IMR-90 (cell line): ENCODE measurements at regions of chr20 and their contacts with region 1.

Region 1: GRCh38 chr20:16517946-16518783 is 55.1 kb downstream of the KIF16B start:
- DNase-seq: peak; percentile 42
- ATAC-seq: peak; percentile 88
- H3K4me3 ChIP-seq: no peak overlapping the region
- H3K27ac ChIP-seq: no peak overlapping the region
- H3K4me1 ChIP-seq: no peaks in the 10 kb centered on the region
- H3K27me3 ChIP-seq: no peaks in the 10 kb centered on the region
- CTCF ChIP-seq: peak; percentile 64
- POLR2A ChIP-seq: no peak
- RAD21 ChIP-seq: peak; percentile 67

Region 2: DNA sequence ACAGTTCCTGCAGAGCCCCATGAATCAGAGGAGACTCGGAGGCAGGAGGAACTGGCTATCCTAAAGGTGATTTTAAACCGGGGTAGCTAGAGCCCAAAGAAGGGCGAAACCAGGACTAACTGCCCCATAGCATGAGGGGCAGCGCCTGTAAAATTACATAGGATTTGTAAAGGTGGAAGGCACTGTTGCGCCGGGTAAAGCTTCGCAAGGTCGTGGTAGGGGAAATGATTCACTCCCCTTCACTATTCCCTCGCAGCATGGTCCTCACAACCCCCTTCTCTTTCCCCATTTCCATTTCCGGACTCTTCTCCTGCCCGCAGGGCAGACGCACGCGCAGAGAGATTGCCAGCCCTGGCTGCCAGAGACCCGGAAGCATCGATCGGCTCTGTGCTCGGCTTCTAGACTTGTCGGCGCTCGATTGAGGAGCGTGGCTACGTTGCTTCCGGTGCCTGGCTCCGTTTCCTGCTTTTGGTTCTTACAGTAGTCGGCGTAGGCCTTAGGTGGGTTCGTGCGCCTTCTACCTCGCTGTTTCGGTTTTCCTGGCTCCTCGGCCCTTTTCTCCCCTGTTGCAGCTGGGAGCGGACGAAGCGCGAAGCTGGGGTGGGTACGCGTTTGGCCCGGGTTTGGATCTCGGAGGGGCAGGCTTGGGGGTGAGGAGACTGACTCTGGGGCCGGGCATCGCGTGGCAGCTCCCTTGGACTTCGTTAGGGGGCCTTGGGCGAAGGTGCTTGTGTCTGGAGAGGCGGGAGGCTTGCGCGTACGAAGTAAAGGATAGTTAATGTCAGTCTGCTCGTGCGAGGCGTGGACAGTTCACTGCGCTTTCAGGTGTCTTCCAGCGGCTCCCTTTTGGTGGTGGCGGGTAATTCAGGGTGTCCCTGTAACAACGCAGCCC is 211.6 kb after region 1 on chr20 and contains the start of gene SNRPB2:
- CTCF ChIA-PET with region 1: no interaction called
- POLR2A ChIA-PET with region 1: no interaction called
- dilution Hi-C with region 1: no loop called
- in situ Hi-C with region 1: loop called (anchors 10 kb)
- intact Hi-C with region 1: loop called (anchors 10 kb)
- DNase-seq: peak; percentile 95
- ATAC-seq: peak; percentile 99
- H3K4me3 ChIP-seq: peak within 1 kb of the TSS; percentile 89
- H3K27ac ChIP-seq: peak within 1 kb of the TSS; percentile 92
- H3K4me1 ChIP-seq: no peaks in the 10 kb centered on the region; the same call in 1 of the 2 replicates
- H3K27me3 ChIP-seq: no peaks in the 10 kb centered on the region
- CTCF ChIP-seq: no peak
- POLR2A ChIP-seq: peak; percentile 94
- RAD21 ChIP-seq: no peak
- total RNA-seq, gene SNRPB2: 27.1 and 69.2 TPM in 2 replicates

Region 3: GRCh38 chr20:16761305-16761829 is 243.2 kb after region 1 on chr20:
- CTCF ChIA-PET with region 1: no interaction called
- POLR2A ChIA-PET with region 1: no interaction called
- dilution Hi-C with region 1: no loop called
- in situ Hi-C with region 1: no loop called
- intact Hi-C with region 1: loop called (anchors 1 kb)
- DNase-seq: peak; percentile 75
- ATAC-seq: peak; percentile 94
- H3K4me3 ChIP-seq: no peak overlapping the region
- H3K27ac ChIP-seq: no peak overlapping the region
- H3K4me1 ChIP-seq: no peaks in the 10 kb centered on the region
- H3K27me3 ChIP-seq: peaks cover 2% of the 10 kb centered on the region
- CTCF ChIP-seq: peak; percentile 81
- POLR2A ChIP-seq: no peak
- RAD21 ChIP-seq: peak; percentile 89